Naive thymus-derived CD4-positive, alpha-beta T cell (primary cell): ENCODE measurements at regions of chr6 and their contacts with region 1.

Region 1: DNA sequence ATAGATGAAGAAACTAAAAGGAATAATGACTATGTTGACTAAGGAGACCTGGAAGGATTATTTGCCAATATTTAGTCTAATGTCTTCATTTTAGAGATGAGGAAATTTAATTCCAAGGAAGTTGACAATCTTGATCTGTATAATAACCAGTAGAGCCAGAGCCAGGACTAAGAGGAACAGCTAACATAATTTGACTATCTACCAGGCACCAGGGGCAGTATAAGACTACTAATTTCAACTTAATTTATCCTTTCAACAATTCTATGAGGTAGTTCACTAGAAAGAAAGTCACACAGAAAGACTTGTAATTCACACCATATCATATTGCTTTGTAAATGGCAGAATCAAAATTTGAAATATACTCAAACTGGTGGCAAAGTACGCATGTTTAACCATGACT is 273.0 kb upstream of the STXBP5 start:
- DNase-seq: peak in 5 of 9 donors; percentile 4 to 18 (median 12)
- ATAC-seq: no peak
- H3K4me3 ChIP-seq: no peak overlapping the region
- H3K4me3 Mint-ChIP-seq: no peak overlapping the region
- H3K27ac ChIP-seq: no peak overlapping the region
- H3K27ac Mint-ChIP-seq: no peak overlapping the region
- H3K4me1 ChIP-seq: no peaks in the 10 kb centered on the region
- H3K4me1 Mint-ChIP-seq: peaks cover 0 to 4% (median 0%) of the 10 kb centered on the region in 7 donors
- H3K27me3 ChIP-seq: no peaks in the 10 kb centered on the region
- H3K27me3 Mint-ChIP-seq: peaks cover 0 to 4% (median 0%) of the 10 kb centered on the region in 5 donors

Region 2: GRCh38 chr6:147222160-147222838 is 291.1 kb after region 1 on chr6:
- CTCF ChIA-PET with region 1: no interaction called
- POLR2A ChIA-PET with region 1: no interaction called
- intact Hi-C with region 1: loop called in 1 of 2 experiments (anchors 1 kb)
- DNase-seq: peak in 6 of 9 donors; percentile 21 to 45 (median 36)
- ATAC-seq: peak; percentile 61
- H3K4me3 ChIP-seq: no peak overlapping the region
- H3K4me3 Mint-ChIP-seq: peak overlapping the region in 2 of 10 donors; percentile 29 to 35
- H3K27ac ChIP-seq: no peak overlapping the region
- H3K27ac Mint-ChIP-seq: peak overlapping the region in 6 of 9 donors; percentile 11 to 64 (median 42)
- H3K4me1 ChIP-seq: peaks cover 0 to 5% of the 10 kb centered on the region in 2 donors
- H3K4me1 Mint-ChIP-seq: peaks cover 16 to 74% (median 65%) of the 10 kb centered on the region in 7 donors
- H3K27me3 ChIP-seq: no peaks in the 10 kb centered on the region
- H3K27me3 Mint-ChIP-seq: no peaks in the 10 kb centered on the region

Region 3: DNA sequence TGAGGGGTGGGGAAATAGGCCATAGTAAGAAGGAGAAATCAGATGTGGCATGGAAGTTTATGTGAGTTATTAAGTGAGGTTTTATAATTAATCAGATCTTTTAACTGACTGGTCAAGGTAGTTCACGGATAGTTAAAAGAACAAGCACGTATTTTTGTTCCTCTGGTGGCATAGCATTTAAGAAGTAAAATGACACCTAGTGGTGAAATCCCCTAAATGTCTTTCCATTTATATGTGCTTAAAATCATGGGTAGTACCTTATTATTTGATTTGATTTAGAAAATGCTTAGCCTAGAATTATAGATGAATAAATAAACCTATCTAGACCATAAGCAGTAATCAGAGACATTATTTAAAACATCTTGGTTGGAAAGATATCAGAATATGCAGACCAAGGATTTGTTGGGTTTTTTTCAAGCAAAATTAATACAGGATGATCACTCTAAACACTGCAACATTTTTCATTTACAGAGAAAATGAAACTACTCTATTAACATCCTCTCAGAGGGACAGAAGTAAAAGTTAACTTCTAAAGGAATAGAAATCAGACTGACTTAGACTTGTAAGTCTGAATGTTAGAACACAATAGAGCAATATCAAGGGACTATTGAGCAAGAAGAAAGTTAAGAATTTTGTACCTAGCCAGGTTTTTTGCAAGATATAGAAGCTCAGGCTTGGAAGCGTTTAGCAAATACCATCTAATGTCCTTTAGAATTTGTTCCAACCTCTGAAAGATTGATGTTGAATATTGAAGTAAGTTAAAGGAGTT is 354.1 kb after region 1 on chr6:
- CTCF ChIA-PET with region 1: interaction called, 4 read pairs
- POLR2A ChIA-PET with region 1: no interaction called
- intact Hi-C with region 1: loop called in 1 of 2 experiments (anchors 1 kb)
- DNase-seq: peak in 5 of 9 donors; percentile 16 to 34 (median 21)
- ATAC-seq: peak; percentile 52
- H3K4me3 ChIP-seq: no peak overlapping the region
- H3K4me3 Mint-ChIP-seq: peak overlapping the region in 2 of 10 donors; percentile 6 to 38
- H3K27ac ChIP-seq: no peak overlapping the region
- H3K27ac Mint-ChIP-seq: peak overlapping the region in 5 of 9 donors; percentile 0 to 76 (median 11)
- H3K4me1 ChIP-seq: no peaks in the 10 kb centered on the region
- H3K4me1 Mint-ChIP-seq: peaks cover 9 to 32% (median 25%) of the 10 kb centered on the region in 7 donors
- H3K27me3 ChIP-seq: no peaks in the 10 kb centered on the region
- H3K27me3 Mint-ChIP-seq: no peaks in the 10 kb centered on the region